ENCODE measurements at regions of chr4 and their contacts with region 1.

Region 1: GRCh38 chr4:183602557-183603027 is 56.4 kb downstream of the RWDD4 start:
- DNase-seq: no peak

Region 2: GRCh38 chr4:183471946-183472708 is 130.5 kb before region 1 on chr4:
- intact Hi-C with region 1: loop called (anchors 10 kb)
- DNase-seq: peak; percentile 94

Region 3: DNA sequence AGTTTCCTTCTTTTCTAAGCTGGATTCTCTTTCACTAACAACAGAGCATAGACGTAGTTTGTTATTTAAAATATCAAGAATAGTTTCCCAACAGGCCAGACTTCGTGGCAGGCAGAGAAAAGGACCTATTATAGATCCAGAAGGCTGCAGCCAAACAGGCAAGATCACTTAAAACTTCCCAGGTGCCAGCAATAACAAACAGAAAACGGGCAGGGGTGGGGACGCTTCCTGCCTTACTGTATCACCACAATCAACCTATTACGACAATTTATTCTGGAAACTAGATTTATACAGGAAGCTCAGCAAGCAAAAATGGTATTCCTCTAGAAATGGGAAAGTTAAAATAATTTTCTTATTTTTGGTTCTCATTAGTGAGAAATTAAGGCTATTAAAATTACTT is 34.3 kb after region 1 on chr4:
- intact Hi-C with region 1: no loop called
- DNase-seq: no peak